Dendritic cell treated with granulocyte-macrophage colony-stimulating factor and Interleukin-4, amounts not matched to agents 40 ng/mL and 50 ng/mL, for 4 days (primary cell): ENCODE measurements at regions of chr22 and their contacts with region 1.

Region 1: DNA sequence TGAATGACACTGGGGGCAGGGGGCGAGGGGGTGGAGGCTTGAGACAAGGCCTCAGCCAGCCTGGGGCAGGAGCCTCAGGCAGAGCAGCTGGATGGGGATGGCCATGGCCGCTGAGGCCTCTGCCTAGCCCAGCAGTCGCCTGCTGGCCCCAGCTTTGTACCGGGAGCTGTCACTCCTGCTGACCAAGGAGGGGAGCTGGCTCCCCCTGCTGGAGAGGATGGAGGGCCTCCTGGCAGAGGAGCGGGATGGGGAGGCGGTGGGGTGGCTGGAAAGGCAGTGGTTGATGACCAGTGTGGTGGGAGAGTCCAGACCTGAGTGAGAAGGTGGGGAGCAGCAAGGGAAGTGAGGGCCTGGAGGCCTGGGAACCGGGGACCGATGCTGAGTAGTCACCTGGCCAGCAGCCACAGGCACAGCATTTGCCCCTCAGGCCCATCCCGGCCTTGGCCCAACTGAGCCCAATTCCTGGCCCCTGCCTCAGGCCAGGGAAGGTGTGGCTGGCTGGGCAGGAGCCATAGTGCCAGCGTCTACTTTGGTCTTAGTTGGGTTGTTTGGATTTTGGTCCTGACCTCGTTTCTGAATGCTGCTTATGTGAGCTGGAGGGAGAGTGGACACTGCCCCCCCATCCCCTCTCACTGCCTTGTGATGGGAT is 6.0 kb upstream of the SUSD2 start:
- H3K4me3 Mint-ChIP-seq: no peak overlapping the region
- H3K27ac Mint-ChIP-seq: no peak overlapping the region
- H3K4me1 Mint-ChIP-seq: peaks cover 13% of the 10 kb centered on the region
- H3K27me3 Mint-ChIP-seq: no peaks in the 10 kb centered on the region

Region 2: DNA sequence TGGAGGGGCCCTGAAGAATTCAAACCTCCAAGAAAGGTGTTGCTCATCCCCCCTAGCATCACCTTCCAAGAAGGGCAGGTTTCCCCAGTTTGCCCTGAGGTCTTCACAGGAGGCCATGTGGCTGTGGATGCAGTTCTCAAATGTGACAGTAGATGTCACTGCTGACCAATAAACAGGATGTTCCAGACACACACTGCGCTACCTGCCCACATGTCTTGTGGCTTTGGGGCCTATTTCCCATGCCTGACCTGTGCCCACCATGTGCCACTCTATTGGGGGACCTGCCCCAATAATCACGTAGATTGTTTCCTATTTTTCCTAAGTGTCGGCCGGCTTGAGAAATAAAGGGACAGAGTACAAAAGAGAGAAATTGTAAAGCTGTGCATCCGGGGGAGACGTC is 190.9 kb before region 1 on chr22:
- intact Hi-C with region 1: loop called (anchors 10 kb)
- H3K4me3 Mint-ChIP-seq: no peak overlapping the region
- H3K27ac Mint-ChIP-seq: no peak overlapping the region
- H3K4me1 Mint-ChIP-seq: peaks cover 15% of the 10 kb centered on the region
- H3K27me3 Mint-ChIP-seq: peaks cover 11% of the 10 kb centered on the region

Region 3: GRCh38 chr22:24117942-24118341 is 57.3 kb before region 1 on chr22:
- intact Hi-C with region 1: loop called (anchors 10 kb)
- H3K4me3 Mint-ChIP-seq: no peak overlapping the region
- H3K27ac Mint-ChIP-seq: peak overlapping the region; percentile 31
- H3K4me1 Mint-ChIP-seq: peaks cover 10% of the 10 kb centered on the region
- H3K27me3 Mint-ChIP-seq: no peaks in the 10 kb centered on the region